Activated CD4-positive, alpha-beta T cell treated with anti-CD3 and anti-CD28 coated beads, Interleukin-2, amount 10 ng/mL, durations not matched to agents 24 days and 14 days (primary cell): ENCODE measurements at regions of chr19 and their contacts with region 1.

Region 1: GRCh38 chr19:40055832-40056504 is at the start of gene ZNF780B:
- DNase-seq: peak; percentile 92
- H3K4me3 Mint-ChIP-seq: peak within 1 kb of the TSS; percentile 100
- H3K27ac Mint-ChIP-seq: peak within 1 kb of the TSS; percentile 98
- H3K4me1 Mint-ChIP-seq: peaks cover 35% of the 10 kb centered on the region
- H3K27me3 Mint-ChIP-seq: peaks cover 6% of the 10 kb centered on the region
- total RNA-seq, gene ZNF780B: 19.5 and 24.6 TPM in 2 replicates

Region 2: GRCh38 chr19:39996811-39997594 is 59.0 kb before region 1 on chr19 and contains the start of gene ZNF546:
- intact Hi-C with region 1: loop called (anchors 5 kb)
- DNase-seq: peak; percentile 97
- H3K4me3 Mint-ChIP-seq: peak within 1 kb of the TSS; percentile 90
- H3K27ac Mint-ChIP-seq: peak within 1 kb of the TSS; percentile 95
- H3K4me1 Mint-ChIP-seq: peaks cover 24% of the 10 kb centered on the region
- H3K27me3 Mint-ChIP-seq: no peaks in the 10 kb centered on the region
- total RNA-seq, gene ZNF546: 4.4 and 6.7 TPM in 2 replicates

Region 3: GRCh38 chr19:40013991-40014390 is 42.0 kb before region 1 on chr19:
- intact Hi-C with region 1: no loop called
- DNase-seq: no peak
- H3K4me3 Mint-ChIP-seq: no peak overlapping the region
- H3K27ac Mint-ChIP-seq: no peak overlapping the region
- H3K4me1 Mint-ChIP-seq: no peaks in the 10 kb centered on the region
- H3K27me3 Mint-ChIP-seq: no peaks in the 10 kb centered on the region

Region 4: DNA sequence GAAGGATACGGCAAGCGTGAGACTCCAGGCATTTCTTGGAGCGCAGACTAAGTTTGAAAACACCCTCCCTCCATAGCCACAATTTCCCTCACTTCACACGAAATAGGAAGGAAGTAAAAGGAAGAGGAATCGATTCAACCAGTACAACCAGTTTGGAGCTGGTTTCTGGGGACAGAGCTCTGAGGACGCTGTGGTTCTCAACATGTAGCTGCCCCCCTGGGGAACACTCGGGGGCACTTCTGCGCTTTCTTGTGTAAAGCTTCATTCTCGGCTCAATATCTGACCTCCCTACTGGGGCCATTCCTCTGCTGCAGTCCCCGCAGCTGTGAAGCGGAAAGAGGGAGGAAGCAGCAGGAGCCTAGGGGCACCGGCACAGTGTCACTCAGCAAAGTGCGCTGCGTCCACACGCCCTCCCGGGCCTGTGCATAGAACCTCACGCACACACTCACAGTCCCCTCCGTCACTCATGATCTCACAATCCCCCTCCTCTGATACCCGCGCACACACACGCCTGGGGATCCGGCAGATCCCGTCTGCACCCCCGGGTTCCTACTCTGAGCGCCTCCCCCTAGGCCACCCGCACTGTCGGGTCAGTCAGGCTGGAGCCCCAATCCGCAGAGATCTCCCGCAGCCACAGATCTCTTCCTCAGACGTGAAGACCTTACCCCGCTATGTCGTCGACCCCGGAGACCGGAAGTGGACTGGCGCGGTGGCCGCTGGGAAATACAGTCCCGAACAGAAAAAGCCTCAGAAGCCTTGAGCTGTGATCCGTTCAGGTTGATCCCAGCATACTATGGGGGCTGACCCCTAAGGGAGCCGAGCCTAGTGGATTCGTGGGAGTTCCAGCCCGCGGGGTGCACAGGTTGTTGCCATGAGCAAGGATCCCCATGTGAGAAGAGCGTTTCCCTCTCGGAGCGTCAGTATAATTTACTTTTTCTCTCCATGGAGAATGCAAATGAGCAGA is 34.6 kb after region 1 on chr19 and contains the start of gene ZNF780A:
- intact Hi-C with region 1: loop called (anchors 5 kb)
- DNase-seq: peak; percentile 94
- H3K4me3 Mint-ChIP-seq: peak within 1 kb of the TSS; percentile 97
- H3K27ac Mint-ChIP-seq: peak within 1 kb of the TSS; percentile 97
- H3K4me1 Mint-ChIP-seq: peaks cover 25% of the 10 kb centered on the region
- H3K27me3 Mint-ChIP-seq: peaks cover 3% of the 10 kb centered on the region
- total RNA-seq, gene ZNF780A: 14.7 and 16.1 TPM in 2 replicates

Region 5: GRCh38 chr19:40110570-40110969 is 54.6 kb after region 1 on chr19:
- intact Hi-C with region 1: no loop called
- DNase-seq: no peak
- H3K4me3 Mint-ChIP-seq: no peak overlapping the region
- H3K27ac Mint-ChIP-seq: no peak overlapping the region
- H3K4me1 Mint-ChIP-seq: no peaks in the 10 kb centered on the region
- H3K27me3 Mint-ChIP-seq: peaks cover 9% of the 10 kb centered on the region